CD4-positive, alpha-beta memory T cell (primary cell): ENCODE measurements at regions of chr11 and their contacts with region 1.

Region 1: DNA sequence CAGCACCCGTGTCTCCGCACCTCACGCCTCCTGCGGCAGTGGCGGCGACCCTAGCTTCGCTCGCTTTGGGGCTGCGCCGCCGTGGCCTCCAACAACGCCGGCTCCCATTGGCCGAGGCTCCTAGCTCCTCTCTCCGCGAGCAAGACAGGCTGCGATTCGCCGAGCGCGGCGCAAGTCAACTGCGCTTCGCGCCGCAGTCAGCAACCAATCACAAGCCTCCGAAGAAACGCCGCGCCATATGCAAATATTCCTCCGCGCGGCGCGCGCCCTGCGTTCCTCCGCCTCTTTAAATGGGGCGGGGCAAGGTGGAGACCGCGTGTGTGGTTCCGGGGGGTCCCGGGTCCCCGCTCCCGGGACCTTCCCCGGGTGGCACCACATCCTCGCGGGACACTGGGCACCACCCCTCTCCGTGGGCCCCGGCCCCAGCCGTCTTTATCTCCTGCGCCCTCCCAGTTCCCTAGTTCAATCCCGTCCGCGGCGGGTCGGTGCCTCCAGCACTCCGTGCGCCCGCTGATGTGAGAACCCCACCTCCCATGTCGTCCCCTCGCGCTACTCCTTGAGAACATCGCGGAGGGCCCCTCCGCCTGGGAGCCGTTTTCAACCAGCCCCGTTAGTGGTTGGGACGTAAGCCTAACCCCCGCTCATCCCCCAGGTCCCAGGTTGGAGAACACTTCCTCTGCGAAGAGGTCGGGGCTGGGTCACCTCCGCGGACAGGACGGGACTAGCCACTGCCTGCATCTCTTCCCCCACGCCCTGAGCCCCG is at the start of gene NAP1L4:
- DNase-seq: peak; percentile 94 to 97 (median 95)
- H3K4me3 ChIP-seq: peak within 1 kb of the TSS; percentile 76 to 90
- H3K4me3 Mint-ChIP-seq: peak within 1 kb of the TSS; percentile 96 to 100 (median 98)
- H3K27ac ChIP-seq: peak within 1 kb of the TSS; percentile 84
- H3K27ac Mint-ChIP-seq: peak within 1 kb of the TSS; percentile 97 to 99 (median 99)
- H3K4me1 ChIP-seq: peaks cover 31% of the 10 kb centered on the region
- H3K4me1 Mint-ChIP-seq: peaks cover 12 to 57% (median 25%) of the 10 kb centered on the region in 4 donors
- H3K27me3 ChIP-seq: no peaks in the 10 kb centered on the region
- H3K27me3 Mint-ChIP-seq: peaks cover 0 to 2% of the 10 kb centered on the region in 2 donors
- total RNA-seq, gene NAP1L4: 299 to 303 TPM

Region 2: GRCh38 chr11:2885676-2886081 is 106.7 kb before region 1 on chr11 and contains the start of gene CDKN1C:
- CTCF ChIA-PET with region 1: no interaction called
- POLR2A ChIA-PET with region 1: interaction called, 3 read pairs
- intact Hi-C with region 1: loop called (anchors 5 kb)
- DNase-seq: peak; percentile 86 to 88 (median 86)
- H3K4me3 ChIP-seq: peak within 1 kb of the TSS; percentile 61 to 86
- H3K4me3 Mint-ChIP-seq: peak within 1 kb of the TSS; percentile 87 to 97 (median 94)
- H3K27ac ChIP-seq: peak within 1 kb of the TSS; percentile 10
- H3K27ac Mint-ChIP-seq: peak within 1 kb of the TSS; percentile 61 to 93 (median 84)
- H3K4me1 ChIP-seq: peaks cover 17% of the 10 kb centered on the region
- H3K4me1 Mint-ChIP-seq: peaks cover 2 to 28% (median 16%) of the 10 kb centered on the region in 4 donors
- H3K27me3 ChIP-seq: no peaks in the 10 kb centered on the region
- H3K27me3 Mint-ChIP-seq: no peaks in the 10 kb centered on the region
- total RNA-seq, gene CDKN1C: 4.9 to 6.1 TPM

Region 3: DNA sequence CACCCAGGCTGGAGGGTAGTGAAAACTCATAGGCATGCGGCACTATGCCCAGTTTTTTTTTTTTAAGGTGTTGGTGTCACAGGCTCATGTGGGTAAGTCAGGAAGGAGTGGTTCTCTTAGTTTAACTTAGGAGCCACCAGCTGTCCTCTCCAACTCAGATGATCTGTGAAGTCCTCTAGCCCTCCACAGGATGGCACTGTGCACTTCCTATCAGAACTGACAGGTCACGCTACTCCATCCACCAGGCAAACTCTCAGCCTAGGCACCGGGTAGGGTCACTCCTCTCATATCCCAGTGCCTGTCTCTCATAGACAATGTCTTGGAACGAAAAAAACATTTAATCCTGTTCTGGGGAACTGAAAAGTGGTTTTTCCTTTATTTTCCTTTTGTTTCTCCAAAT is 16.8 kb before region 1 on chr11:
- CTCF ChIA-PET with region 1: interaction called, 24 read pairs
- POLR2A ChIA-PET with region 1: interaction called, 19 read pairs
- intact Hi-C with region 1: loop called (anchors 1 kb)
- DNase-seq: peak; percentile 47 to 63 (median 49)
- H3K4me3 ChIP-seq: no peak overlapping the region
- H3K4me3 Mint-ChIP-seq: no peak overlapping the region
- H3K27ac ChIP-seq: no peak overlapping the region
- H3K27ac Mint-ChIP-seq: peak overlapping the region in 3 of 7 donors; percentile 30 to 69 (median 51)
- H3K4me1 ChIP-seq: peaks cover 12% of the 10 kb centered on the region
- H3K4me1 Mint-ChIP-seq: peaks cover 21 to 44% (median 36%) of the 10 kb centered on the region in 4 donors
- H3K27me3 ChIP-seq: no peaks in the 10 kb centered on the region
- H3K27me3 Mint-ChIP-seq: no peaks in the 10 kb centered on the region

Region 4: DNA sequence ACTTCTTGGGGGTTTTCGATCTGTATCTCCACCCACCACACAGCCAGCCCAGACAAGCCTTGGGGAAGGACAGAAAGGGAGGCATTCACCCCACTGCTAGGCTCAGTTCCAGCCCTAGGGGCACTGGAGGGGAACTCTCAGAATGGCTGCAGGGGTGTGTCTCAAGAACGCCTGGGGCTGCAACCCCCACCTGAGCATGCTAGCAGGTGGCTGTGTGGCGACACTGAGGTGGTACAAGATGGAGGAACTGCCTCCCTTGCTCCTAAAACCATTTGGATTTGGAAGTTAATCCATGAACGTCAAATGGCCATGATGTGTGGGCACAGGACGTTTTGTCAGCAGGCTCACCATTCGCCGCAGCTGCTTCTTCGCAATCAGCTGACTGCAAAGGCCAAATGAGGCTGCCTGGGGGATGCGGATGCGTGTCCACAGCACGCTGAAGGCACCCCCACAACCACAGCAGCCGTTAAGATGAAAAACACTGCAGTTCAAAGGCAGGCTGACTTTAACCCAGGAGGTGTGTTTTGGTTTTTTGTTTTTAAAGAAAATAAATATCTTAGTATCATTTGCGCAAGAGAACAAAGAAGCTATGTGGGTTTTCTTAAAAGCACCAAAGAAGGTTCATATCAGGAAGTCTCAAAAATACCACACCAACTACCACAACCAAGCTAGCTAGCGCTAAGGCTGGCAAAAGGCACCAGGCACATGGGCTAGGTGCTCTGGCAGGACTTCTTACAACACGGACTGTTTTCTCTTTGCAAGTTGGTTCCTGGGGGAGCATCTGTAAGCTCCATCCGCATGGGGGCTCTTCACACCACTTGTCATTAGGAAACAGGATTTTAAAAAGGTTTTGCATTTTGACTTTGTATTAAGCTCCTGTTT is 21.9 kb after region 1 on chr11:
- CTCF ChIA-PET with region 1: interaction called, 24 read pairs
- POLR2A ChIA-PET with region 1: interaction called, 178 read pairs
- intact Hi-C with region 1: loop called (anchors 1 kb)
- DNase-seq: peak; percentile 88 to 93 (median 90)
- H3K4me3 ChIP-seq: peak overlapping the region in 1 of 2 donors; percentile 11
- H3K4me3 Mint-ChIP-seq: peak overlapping the region; percentile 43 to 84 (median 74)
- H3K27ac ChIP-seq: peak overlapping the region; percentile 39
- H3K27ac Mint-ChIP-seq: peak overlapping the region; percentile 85 to 95 (median 90)
- H3K4me1 ChIP-seq: peaks cover 51% of the 10 kb centered on the region
- H3K4me1 Mint-ChIP-seq: peaks cover 21 to 74% (median 37%) of the 10 kb centered on the region in 4 donors
- H3K27me3 ChIP-seq: no peaks in the 10 kb centered on the region
- H3K27me3 Mint-ChIP-seq: no peaks in the 10 kb centered on the region

Region 5: GRCh38 chr11:3037040-3037944 is 44.9 kb after region 1 on chr11:
- CTCF ChIA-PET with region 1: interaction called, 3 read pairs
- POLR2A ChIA-PET with region 1: interaction called, 5 read pairs
- intact Hi-C with region 1: loop called (anchors 1 kb)
- DNase-seq: peak; percentile 28 to 62 (median 38)
- H3K4me3 ChIP-seq: no peak overlapping the region
- H3K4me3 Mint-ChIP-seq: peak overlapping the region in 1 of 8 donors; percentile 5
- H3K27ac ChIP-seq: no peak overlapping the region
- H3K27ac Mint-ChIP-seq: peak overlapping the region in 6 of 7 donors; percentile 4 to 62 (median 36)
- H3K4me1 ChIP-seq: peaks cover 14% of the 10 kb centered on the region
- H3K4me1 Mint-ChIP-seq: peaks cover 8 to 32% (median 24%) of the 10 kb centered on the region in 4 donors
- H3K27me3 ChIP-seq: no peaks in the 10 kb centered on the region
- H3K27me3 Mint-ChIP-seq: no peaks in the 10 kb centered on the region